ENCODE measurements at regions of chr2 and their contacts with region 1.

Region 1: DNA sequence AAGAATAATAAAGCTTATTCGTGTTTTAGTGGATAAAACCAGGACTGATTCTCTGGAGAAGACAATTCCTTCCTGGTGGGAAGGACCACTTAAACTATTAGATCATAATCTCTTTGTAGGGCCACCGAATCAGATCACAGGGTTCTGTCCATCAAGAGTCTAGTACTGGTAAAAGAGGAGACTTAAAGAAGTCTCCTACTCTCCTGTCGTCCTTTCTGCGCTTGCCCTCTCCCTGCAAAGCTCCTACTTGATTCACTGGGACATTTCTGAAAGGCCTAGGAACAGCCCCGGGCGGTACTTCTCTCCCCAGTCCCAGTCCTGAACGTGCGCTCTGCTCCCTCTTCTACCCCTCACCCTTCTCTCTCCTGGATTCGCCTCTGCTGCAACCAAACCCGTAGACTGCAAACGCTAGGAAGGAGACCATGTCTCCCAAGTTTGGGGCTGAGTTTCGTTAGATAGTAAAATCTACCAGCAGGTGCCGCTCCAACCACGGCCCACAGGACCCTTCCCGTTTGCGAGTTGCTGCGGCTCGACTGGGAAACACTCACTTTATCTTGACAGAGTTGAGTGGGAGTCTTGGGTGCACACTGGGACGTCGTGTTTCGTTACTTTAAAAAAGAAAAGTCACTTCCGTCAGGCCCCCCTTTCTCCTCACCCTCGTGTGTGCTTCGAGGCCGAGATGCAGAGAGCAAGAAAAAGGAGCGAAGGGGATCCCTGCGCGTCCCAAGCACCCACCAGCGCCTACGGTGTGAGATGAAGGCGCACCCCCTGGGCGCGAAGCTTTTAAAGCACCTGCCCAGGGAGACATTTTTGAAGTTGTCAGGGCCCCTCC is 923 bp downstream of the FIGLA start:
- DNase-seq: no peak
- ATAC-seq: peak; percentile 90
- H3K4me3 ChIP-seq: no peak overlapping the region
- H3K27ac ChIP-seq: no peak overlapping the region
- H3K4me1 ChIP-seq: no peaks in the 10 kb centered on the region
- H3K27me3 ChIP-seq: peaks cover 30% of the 10 kb centered on the region
- CTCF ChIP-seq: peak; percentile 87

Region 2: DNA sequence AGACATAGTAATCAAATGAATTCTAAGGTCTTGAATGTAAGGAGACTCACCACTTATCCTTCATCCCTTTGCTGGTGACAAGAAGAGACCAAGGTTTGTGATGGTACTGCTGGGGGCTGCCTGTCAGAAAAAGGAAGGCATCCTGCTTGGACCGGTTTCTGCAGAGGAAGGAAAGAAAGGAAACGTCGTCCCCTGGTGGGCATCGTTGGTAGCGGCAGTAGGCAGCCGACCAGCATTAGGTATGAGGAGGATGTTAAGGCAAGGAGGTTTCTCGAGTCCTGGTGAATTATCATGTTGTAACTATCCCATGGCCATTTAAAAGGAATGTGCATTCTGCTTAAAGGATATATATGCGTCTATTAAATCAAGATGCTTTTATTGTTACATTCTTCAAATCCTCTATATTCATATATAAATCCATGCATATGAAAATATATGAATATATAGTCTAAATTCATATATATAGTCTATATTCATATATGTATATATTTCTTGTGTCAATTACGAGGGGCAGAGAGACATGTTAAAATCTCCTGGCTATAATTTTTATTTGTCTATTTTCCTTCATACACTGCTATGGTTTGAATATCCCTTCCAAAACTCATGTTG is 141.5 kb before region 1 on chr2:
- CTCF ChIA-PET with region 1: no interaction called
- POLR2A ChIA-PET with region 1: no interaction called
- in situ Hi-C with region 1: no loop called
- intact Hi-C with region 1: loop called (anchors 2 kb)
- DNase-seq: peak; percentile 72
- ATAC-seq: peak; percentile 82
- H3K4me3 ChIP-seq: no peak overlapping the region
- H3K27ac ChIP-seq: no peak overlapping the region
- H3K4me1 ChIP-seq: no peaks in the 10 kb centered on the region
- H3K27me3 ChIP-seq: peaks cover 7% of the 10 kb centered on the region
- CTCF ChIP-seq: peak; percentile 99

Region 3: GRCh38 chr2:70656421-70657010 is 133.0 kb before region 1 on chr2:
- CTCF ChIA-PET with region 1: no interaction called
- POLR2A ChIA-PET with region 1: no interaction called
- in situ Hi-C with region 1: no loop called
- intact Hi-C with region 1: loop called (anchors 2 kb)
- DNase-seq: no peak
- ATAC-seq: no peak
- H3K4me3 ChIP-seq: no peak overlapping the region
- H3K27ac ChIP-seq: no peak overlapping the region
- H3K4me1 ChIP-seq: no peaks in the 10 kb centered on the region
- H3K27me3 ChIP-seq: peaks cover 29% of the 10 kb centered on the region
- CTCF ChIP-seq: no peak

Region 4: GRCh38 chr2:70861777-70862625 is 72.5 kb after region 1 on chr2:
- CTCF ChIA-PET with region 1: interaction called, 8 read pairs
- POLR2A ChIA-PET with region 1: no interaction called
- in situ Hi-C with region 1: no loop called
- intact Hi-C with region 1: loop called (anchors 5 kb)
- DNase-seq: peak; percentile 48
- ATAC-seq: peak; percentile 93
- H3K4me3 ChIP-seq: no peak overlapping the region
- H3K27ac ChIP-seq: no peak overlapping the region
- H3K4me1 ChIP-seq: no peaks in the 10 kb centered on the region
- H3K27me3 ChIP-seq: peaks cover 15% of the 10 kb centered on the region
- CTCF ChIP-seq: peak; percentile 99

Measured in Panc1 (cell line).